Left colon (tissue), 2 donors: ENCODE measurements at regions of chr10 and their contacts with region 1.

Region 1: DNA sequence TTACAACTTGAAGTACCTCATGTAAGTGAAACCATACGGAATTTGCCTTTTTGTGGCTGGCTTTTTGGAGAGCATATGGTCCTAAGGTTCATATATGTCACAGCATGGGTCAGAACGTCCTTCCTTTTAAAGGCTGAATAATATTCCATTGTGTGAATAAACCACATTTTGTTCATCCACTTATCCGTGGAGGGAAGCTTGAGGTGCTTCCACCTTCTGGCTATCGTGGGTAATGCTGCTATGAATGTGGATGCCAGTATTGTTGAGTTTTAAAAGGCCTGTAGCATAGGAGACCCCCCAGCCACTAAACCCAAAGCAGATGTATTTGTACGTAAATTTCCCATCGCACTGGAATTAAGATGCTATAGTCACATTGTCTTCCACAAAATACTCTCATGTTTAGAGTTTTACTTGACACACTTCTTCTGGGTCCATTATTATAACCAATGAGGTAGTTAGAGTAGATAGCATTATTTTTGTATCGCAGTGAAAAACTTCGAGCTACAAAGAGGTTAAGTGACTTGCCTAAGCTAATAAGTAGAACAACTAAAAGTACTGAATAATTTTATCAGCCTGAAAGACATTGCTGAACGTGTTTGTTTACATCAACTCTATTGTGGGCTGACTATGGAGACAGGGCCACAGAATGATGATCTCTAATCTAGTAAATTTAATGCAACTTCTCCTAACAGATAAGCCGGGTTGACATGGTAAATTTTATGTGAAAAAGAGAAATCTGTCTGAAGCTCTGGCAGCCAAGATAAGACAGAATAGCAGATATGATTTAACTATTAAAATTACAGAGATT is 183.0 kb upstream of the CTBP2 start:
- DNase-seq: peak in 1 of 2 donors; percentile 21
- ATAC-seq: peak; percentile 58

Region 2: GRCh38 chr10:125048101-125048864 is 295.0 kb before region 1 on chr10:
- intact Hi-C with region 1: loop called in 1 of 2 experiments (anchors 10 kb)
- DNase-seq: peak; percentile 82 to 88
- ATAC-seq: peak; percentile 75

Region 3: DNA sequence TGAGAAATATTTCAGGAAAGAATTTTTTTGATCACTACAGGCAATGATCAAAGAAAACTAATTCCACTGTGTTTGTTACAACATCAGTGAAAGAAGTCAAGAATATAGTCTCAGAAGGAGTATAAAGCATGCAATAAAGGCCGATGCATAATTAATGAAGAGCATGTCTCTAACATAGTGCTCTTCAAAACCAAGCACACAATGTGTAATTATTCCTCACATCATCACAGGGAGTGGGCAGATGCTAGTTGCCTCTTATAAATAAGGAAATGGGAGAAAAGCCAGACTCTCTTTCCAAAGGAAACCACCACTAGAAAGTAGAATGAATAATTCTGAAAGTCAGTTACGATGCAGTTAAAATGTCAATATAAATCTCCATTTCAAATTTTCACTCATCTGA is 119.5 kb after region 1 on chr10:
- intact Hi-C with region 1: no loop called
- DNase-seq: no peak
- ATAC-seq: no peak